T-cell (primary cell): ENCODE measurements at regions of chr6 and their contacts with region 1.

Region 1: DNA sequence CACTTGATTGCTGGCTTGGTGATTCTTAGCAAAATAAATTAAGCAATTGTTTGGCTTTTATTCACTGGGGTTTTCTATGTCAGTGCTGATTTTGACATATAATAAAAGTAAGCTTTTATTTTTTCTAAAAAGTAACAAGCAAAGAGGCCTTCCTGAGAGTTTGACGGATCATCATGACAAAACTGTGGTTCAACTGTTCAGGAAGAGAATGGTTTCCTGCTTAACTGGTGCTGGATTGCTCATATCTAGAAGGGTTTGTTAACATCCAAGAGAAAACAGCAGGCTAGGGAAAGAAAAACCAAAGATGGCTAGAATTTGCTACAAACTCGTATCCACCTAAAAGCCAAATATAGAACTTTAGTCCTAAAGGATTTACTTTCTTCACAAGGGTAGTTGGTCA is 21.2 kb downstream of the SERPINB1 start:
- DNase-seq: no peak
- ATAC-seq: no peak
- H3K4me3 ChIP-seq: no peak overlapping the region
- H3K4me3 Mint-ChIP-seq: no peak overlapping the region
- H3K27ac ChIP-seq: no peak overlapping the region
- H3K27ac Mint-ChIP-seq: no peak overlapping the region
- H3K4me1 ChIP-seq: peaks cover 0 to 12% of the 10 kb centered on the region in 2 experiments
- H3K4me1 Mint-ChIP-seq: peaks cover 19 to 29% (median 25%) of the 10 kb centered on the region in 3 donors
- H3K27me3 ChIP-seq: no peaks in the 10 kb centered on the region
- H3K27me3 Mint-ChIP-seq: no peaks in the 10 kb centered on the region

Region 2: DNA sequence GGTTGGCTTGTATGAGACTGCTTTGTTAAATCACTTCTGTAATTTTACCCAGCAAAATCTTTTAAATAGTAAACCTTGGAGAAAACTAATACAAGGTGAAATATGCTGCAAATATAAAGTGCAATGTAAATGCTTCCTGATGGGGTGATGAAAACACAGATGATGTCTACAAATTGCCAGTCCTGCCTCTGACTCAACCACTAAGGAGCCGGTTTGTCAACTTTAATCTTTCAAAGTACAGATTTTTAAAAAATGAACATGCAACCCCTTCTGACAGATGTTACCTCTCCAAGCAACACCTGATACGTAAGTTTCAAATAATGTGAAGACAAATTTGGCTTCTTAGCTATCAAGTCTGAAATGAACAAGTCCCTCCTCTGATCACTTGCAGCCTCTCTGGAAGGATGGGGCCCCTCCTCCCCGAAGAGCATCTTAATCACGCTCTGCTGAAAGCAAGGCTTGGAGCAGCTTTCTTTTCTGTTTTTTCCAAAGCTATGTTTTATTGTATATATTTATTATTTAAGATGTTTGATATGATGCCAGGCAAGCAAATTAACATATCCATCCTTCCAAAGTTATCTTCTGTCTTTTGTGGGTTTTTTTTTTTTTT is 265.7 kb before region 1 on chr6:
- CTCF ChIA-PET with region 1: no interaction called
- POLR2A ChIA-PET with region 1: interaction called in 1 of 2 experiments, 13 read pairs
- DNase-seq: no peak
- ATAC-seq: no peak
- H3K4me3 ChIP-seq: no peak overlapping the region
- H3K4me3 Mint-ChIP-seq: no peak overlapping the region
- H3K27ac ChIP-seq: no peak overlapping the region
- H3K27ac Mint-ChIP-seq: no peak overlapping the region
- H3K4me1 ChIP-seq: no peaks in the 10 kb centered on the region
- H3K4me1 Mint-ChIP-seq: peaks cover 0 to 6% (median 3%) of the 10 kb centered on the region in 3 donors
- H3K27me3 ChIP-seq: peaks cover 1 to 25% of the 10 kb centered on the region in 2 experiments
- H3K27me3 Mint-ChIP-seq: peaks cover 29 to 33% of the 10 kb centered on the region in 2 donors

Region 3: DNA sequence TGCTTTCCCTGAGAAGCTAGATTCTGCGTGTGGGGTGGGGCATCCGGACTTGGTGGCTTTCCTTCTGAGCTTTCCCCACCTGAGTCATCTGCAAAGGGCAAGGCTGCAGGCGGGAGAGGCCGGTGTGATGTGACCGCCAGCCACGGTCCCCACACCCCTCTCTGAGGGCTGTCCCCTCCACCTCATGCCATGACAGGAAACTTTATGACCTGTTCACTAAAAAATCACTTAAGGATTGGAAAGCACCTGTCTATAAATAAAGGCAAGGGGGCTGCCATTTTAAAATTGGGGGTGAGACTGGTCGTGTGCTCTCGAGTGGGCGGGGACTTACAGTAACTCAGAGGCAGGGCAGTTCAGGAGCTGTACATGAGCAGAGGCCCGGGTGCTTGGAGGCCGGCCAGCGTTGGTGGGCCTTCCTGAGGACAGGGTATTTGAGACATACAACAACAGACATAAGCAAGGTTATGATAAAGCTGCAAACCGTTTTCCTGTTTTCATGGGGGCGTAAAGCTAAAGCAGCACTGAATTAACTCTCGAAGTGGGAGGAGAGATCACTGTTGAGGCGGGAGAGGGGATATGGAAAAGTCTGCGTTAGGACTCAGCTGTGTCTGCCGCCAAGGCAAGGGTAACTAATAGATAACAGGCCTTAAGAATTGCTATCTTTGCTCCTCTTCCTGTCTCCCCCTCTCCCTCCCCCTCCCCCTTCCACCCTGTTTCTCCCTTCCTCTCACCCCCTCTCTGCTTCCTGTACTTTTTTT is 37.3 kb after region 1 on chr6:
- CTCF ChIA-PET with region 1: no interaction called
- POLR2A ChIA-PET with region 1: no interaction called
- DNase-seq: peak in 28 of 35 experiments; percentile 29 to 81 (median 46)
- ATAC-seq: peak; percentile 25 to 45 (median 34)
- H3K4me3 ChIP-seq: peak overlapping the region in 1 of 2 donors; percentile 8
- H3K4me3 Mint-ChIP-seq: peak overlapping the region; percentile 64 to 78 (median 72)
- H3K27ac ChIP-seq: peak overlapping the region; percentile 94
- H3K27ac Mint-ChIP-seq: peak overlapping the region; percentile 98 to 99
- H3K4me1 ChIP-seq: peaks cover 60 to 91% of the 10 kb centered on the region in 2 experiments
- H3K4me1 Mint-ChIP-seq: peaks cover 84 to 96% (median 91%) of the 10 kb centered on the region in 3 donors
- H3K27me3 ChIP-seq: no peaks in the 10 kb centered on the region
- H3K27me3 Mint-ChIP-seq: no peaks in the 10 kb centered on the region

Region 4: DNA sequence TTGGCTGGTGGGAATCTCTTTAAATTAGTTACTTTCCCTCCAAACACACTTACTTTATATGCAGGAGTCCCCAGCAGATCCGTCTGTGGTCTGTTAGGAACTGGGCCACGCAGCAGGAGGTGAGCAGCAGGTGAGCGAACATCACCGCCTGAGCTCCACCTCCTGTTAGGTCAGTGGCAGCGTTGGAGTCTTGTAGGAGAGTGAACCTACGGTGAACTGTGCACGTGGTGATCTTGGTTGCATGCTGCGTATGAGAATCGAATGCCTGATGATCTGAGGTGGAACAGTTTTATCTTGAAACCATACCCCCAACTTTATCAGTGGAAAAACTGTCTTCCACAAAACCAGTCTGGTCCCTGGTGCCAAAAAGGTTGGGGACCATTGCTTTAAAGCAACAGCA is 145.9 kb after region 1 on chr6:
- CTCF ChIA-PET with region 1: interaction called in 1 of 2 experiments, 3 read pairs
- POLR2A ChIA-PET with region 1: interaction called in 1 of 2 experiments, 11 read pairs
- DNase-seq: no peak
- ATAC-seq: no peak
- H3K4me3 ChIP-seq: no peak overlapping the region
- H3K4me3 Mint-ChIP-seq: no peak overlapping the region
- H3K27ac ChIP-seq: no peak overlapping the region
- H3K27ac Mint-ChIP-seq: peak overlapping the region in 1 of 2 donors; percentile 69
- H3K4me1 ChIP-seq: peaks cover 0 to 7% of the 10 kb centered on the region in 2 experiments
- H3K4me1 Mint-ChIP-seq: peaks cover 31 to 41% (median 40%) of the 10 kb centered on the region in 3 donors
- H3K27me3 ChIP-seq: peaks cover 0 to 3% of the 10 kb centered on the region in 2 experiments
- H3K27me3 Mint-ChIP-seq: no peaks in the 10 kb centered on the region